ENCODE measurements at regions of chr19 and their contacts with region 1.

Region 1: GRCh38 chr19:37931881-37932655 is 25.1 kb downstream of the SIPA1L3 start:
- DNase-seq: peak; percentile 72
- ATAC-seq: peak; percentile 6
- H3K4me3 ChIP-seq: peak overlapping the region; percentile 21 to 63 (median 55)
- H3K4me3 Mint-ChIP-seq: peak overlapping the region; percentile 85
- H3K27ac ChIP-seq: peak overlapping the region; percentile 78 to 85
- H3K27ac Mint-ChIP-seq: peak overlapping the region; percentile 87
- H3K4me1 ChIP-seq: peaks cover 86 to 95% of the 10 kb centered on the region in 2 donors
- H3K4me1 Mint-ChIP-seq: peaks cover 90% of the 10 kb centered on the region
- H3K27me3 ChIP-seq: no peaks in the 10 kb centered on the region
- H3K27me3 Mint-ChIP-seq: no peaks in the 10 kb centered on the region
- CTCF ChIP-seq: no peak

Region 2: GRCh38 chr19:37691881-37692504 is 240.1 kb before region 1 on chr19:
- CTCF ChIA-PET with region 1: no interaction called
- POLR2A ChIA-PET with region 1: no interaction called
- intact Hi-C with region 1: no loop called
- DNase-seq: peak; percentile 90
- ATAC-seq: peak; percentile 97
- H3K4me3 ChIP-seq: peak overlapping the region; percentile 53 to 80 (median 68)
- H3K4me3 Mint-ChIP-seq: peak overlapping the region; percentile 99
- H3K27ac ChIP-seq: peak overlapping the region; percentile 68 to 74
- H3K27ac Mint-ChIP-seq: peak overlapping the region; percentile 98
- H3K4me1 ChIP-seq: peaks cover 0 to 4% of the 10 kb centered on the region in 2 donors
- H3K4me1 Mint-ChIP-seq: peaks cover 11% of the 10 kb centered on the region
- H3K27me3 ChIP-seq: no peaks in the 10 kb centered on the region
- H3K27me3 Mint-ChIP-seq: no peaks in the 10 kb centered on the region
- CTCF ChIP-seq: peak; percentile 27

Region 3: DNA sequence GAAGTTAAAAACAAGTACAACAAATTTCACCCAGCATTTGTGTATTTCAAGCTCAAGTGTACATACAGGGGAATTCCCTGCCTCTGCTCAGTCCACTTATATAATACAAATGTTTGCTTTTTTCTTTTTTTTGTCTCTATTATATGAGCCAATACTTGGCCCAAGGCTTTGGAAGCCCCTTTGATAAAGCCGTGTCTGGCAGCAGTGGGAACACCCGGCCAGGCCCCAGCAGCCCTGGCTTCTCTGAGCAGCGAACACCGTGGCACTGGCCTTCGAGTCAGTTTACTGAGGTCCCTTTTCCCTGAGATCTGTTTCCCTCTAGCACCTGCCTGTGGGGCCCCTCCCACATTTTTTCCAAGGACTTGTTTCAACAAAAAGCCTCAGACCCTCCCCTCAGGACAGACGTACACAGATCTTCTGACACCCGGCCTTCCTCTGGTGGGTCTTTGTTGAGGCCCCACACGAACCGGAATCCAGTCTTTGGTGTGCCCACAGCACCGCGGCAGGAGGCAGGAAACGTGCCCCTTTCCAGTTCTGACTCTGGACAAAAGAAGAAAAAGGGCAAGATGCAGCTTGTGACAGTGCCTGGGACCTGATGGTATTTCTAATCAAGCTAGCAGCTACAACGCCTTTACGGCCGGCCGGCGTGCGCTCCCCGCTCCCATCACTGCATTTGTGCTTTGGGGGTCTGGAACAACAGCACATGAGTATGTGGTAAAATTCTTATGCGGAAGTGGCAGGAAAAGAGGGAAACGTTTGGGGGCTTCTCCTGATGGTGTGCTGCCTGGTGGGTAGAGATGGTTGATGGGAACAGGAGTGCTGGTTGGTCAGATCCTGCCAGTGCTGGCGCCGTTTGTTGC is 11.2 kb before region 1 on chr19:
- CTCF ChIA-PET with region 1: interaction called, 17 read pairs
- POLR2A ChIA-PET with region 1: interaction called, 5 read pairs
- intact Hi-C with region 1: no loop called
- DNase-seq: peak; percentile 45
- ATAC-seq: peak; percentile 12
- H3K4me3 ChIP-seq: peak overlapping the region in 4 of 5 experiments; percentile 1 to 56 (median 24)
- H3K4me3 Mint-ChIP-seq: peak overlapping the region; percentile 80
- H3K27ac ChIP-seq: peak overlapping the region; percentile 72 to 87
- H3K27ac Mint-ChIP-seq: peak overlapping the region; percentile 95
- H3K4me1 ChIP-seq: peaks cover 77 to 87% of the 10 kb centered on the region in 2 donors
- H3K4me1 Mint-ChIP-seq: peaks cover 69% of the 10 kb centered on the region
- H3K27me3 ChIP-seq: no peaks in the 10 kb centered on the region
- H3K27me3 Mint-ChIP-seq: no peaks in the 10 kb centered on the region
- CTCF ChIP-seq: no peak

Region 4: GRCh38 chr19:37963190-37963936 is 31.3 kb after region 1 on chr19:
- CTCF ChIA-PET with region 1: no interaction called
- POLR2A ChIA-PET with region 1: interaction called, 3 read pairs
- intact Hi-C with region 1: loop called (anchors 2 kb)
- DNase-seq: no peak
- ATAC-seq: no peak
- H3K4me3 ChIP-seq: no peak overlapping the region
- H3K4me3 Mint-ChIP-seq: peak overlapping the region; percentile 29
- H3K27ac ChIP-seq: peak overlapping the region; percentile 69 to 77
- H3K27ac Mint-ChIP-seq: peak overlapping the region; percentile 91
- H3K4me1 ChIP-seq: peaks cover 58 to 72% of the 10 kb centered on the region in 2 donors
- H3K4me1 Mint-ChIP-seq: peaks cover 71% of the 10 kb centered on the region
- H3K27me3 ChIP-seq: no peaks in the 10 kb centered on the region
- H3K27me3 Mint-ChIP-seq: no peaks in the 10 kb centered on the region
- CTCF ChIP-seq: no peak

Region 5: DNA sequence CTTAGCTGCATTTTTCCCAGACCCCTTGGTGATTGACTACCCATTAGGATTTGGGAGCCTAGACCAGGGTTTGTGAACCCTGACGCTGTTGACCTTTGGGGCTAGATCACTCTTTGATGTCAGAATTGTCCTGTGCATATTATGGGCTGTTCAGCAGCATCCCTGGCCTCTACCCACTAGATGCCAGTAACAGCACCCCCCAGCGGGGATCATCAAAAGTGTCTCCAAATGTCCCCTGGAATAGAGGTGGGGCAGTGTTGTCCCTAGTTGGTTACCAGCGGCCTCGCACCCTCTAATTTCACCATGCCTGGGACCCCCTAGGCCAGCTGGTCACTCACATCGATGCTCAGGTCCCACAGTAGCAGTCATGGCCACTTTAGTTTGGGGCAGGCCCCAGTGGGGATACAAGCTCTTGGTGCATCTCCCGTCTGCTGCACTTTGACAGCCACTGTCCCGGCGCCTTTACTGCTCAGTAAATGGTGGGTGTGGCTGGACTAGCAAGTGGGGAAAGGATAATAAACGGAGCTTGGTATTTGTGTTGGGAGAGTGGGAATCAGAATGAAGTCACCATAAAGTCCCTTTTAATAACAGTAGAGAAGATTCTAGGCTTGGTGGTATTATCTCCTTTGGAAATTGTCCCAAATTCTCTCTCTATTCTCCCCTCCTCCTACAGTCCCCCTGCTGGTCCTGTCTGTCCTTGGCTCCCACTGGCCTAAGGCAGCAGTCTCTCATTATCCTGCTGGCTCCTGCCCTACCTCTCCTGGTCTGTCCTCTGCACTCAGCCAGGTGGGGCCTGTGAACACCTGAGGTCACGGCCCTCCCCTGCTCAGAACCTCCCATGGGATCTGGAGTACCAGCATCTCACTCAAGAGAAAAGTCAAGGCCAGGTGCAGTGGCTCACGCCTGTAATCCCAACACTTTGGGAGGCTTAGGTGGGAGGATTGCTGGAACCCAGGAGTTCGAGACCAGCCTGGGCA is 55.6 kb after region 1 on chr19:
- CTCF ChIA-PET with region 1: interaction called, 10 read pairs
- POLR2A ChIA-PET with region 1: interaction called, 7 read pairs
- intact Hi-C with region 1: no loop called
- DNase-seq: no peak
- ATAC-seq: no peak
- H3K4me3 ChIP-seq: no peak overlapping the region
- H3K4me3 Mint-ChIP-seq: no peak overlapping the region
- H3K27ac ChIP-seq: peak overlapping the region; percentile 88 to 93
- H3K27ac Mint-ChIP-seq: peak overlapping the region; percentile 99
- H3K4me1 ChIP-seq: peaks cover 75 to 91% of the 10 kb centered on the region in 2 donors
- H3K4me1 Mint-ChIP-seq: peaks cover 85% of the 10 kb centered on the region
- H3K27me3 ChIP-seq: no peaks in the 10 kb centered on the region
- H3K27me3 Mint-ChIP-seq: no peaks in the 10 kb centered on the region
- CTCF ChIP-seq: no peak

Region 6: DNA sequence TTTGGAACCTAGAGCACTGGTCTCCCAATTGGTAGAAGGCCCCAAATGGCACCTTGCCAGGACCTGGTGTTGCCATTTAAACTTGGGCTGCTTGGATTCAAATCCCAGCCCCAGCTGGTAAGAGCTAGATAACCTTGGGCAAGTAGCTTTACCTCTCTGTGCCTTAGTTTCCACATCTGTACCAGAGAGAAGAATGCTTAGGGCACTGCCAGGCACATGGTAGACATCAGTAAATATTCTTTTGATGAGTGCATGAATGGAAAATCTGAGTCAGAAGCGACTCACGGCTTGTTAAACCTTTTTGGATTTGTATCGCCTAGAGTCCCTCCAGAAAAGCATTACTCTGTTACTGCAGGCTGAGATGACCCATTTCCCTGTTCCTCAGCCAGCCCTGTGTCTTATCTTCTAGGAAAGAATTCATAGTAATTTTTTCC is 65.9 kb after region 1 on chr19:
- CTCF ChIA-PET with region 1: no interaction called
- POLR2A ChIA-PET with region 1: no interaction called
- intact Hi-C with region 1: no loop called
- DNase-seq: no peak
- ATAC-seq: peak; percentile 45
- H3K4me3 ChIP-seq: no peak overlapping the region
- H3K4me3 Mint-ChIP-seq: no peak overlapping the region
- H3K27ac ChIP-seq: peak overlapping the region in 1 of 2 donors; percentile 62
- H3K27ac Mint-ChIP-seq: peak overlapping the region; percentile 59
- H3K4me1 ChIP-seq: peaks cover 30 to 43% of the 10 kb centered on the region in 2 donors
- H3K4me1 Mint-ChIP-seq: peaks cover 62% of the 10 kb centered on the region
- H3K27me3 ChIP-seq: no peaks in the 10 kb centered on the region
- H3K27me3 Mint-ChIP-seq: no peaks in the 10 kb centered on the region
- CTCF ChIP-seq: no peak

Region 7: DNA sequence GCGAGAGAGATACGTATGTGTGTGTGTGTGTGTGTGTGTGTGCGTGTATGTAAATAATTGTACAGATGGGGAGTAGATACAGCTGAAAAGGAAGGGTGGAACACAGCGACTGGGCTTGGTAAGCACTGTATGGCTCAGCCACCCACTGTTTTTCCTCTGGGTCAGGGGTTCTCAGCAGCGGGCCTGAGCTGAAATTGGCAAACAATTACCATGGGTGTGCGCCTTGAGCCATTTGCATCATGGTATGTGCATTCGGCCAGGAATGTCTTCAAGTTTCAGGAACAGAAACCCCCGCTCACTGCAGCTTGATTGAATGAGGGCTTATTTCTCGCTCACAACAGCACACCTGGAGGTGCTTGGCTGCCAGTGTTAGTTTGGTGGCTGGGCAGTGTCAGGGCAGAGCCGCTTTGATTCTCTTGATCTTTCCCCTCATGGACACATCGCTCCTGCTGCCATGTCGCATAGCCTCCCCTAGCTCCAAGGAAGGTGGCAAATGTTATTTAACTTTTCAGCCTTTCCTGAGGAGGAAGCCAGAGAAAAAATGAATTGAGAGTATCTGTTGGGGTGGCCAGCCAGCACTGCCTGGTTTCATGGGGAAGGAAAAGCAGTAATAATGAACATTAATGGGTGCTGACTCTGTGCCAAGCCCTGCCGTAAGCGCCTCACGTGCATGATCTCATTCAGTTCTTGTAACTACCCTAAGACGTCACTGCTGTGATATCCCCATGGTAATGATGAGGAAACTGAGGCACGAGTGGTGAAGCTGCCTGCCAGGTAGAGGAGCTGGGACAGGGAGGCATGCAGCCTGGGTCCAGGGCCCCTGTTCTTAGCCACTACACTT is 101.8 kb after region 1 on chr19:
- CTCF ChIA-PET with region 1: interaction called, 16 read pairs
- POLR2A ChIA-PET with region 1: interaction called, 10 read pairs
- intact Hi-C with region 1: loop called (anchors 1 kb)
- DNase-seq: peak; percentile 93
- ATAC-seq: peak; percentile 79
- H3K4me3 ChIP-seq: peak overlapping the region in 3 of 5 experiments; percentile 16 to 43 (median 36)
- H3K4me3 Mint-ChIP-seq: peak overlapping the region; percentile 86
- H3K27ac ChIP-seq: peak overlapping the region; percentile 84 to 93
- H3K27ac Mint-ChIP-seq: peak overlapping the region; percentile 99
- H3K4me1 ChIP-seq: peaks cover 63 to 87% of the 10 kb centered on the region in 2 donors
- H3K4me1 Mint-ChIP-seq: peaks cover 81% of the 10 kb centered on the region
- H3K27me3 ChIP-seq: no peaks in the 10 kb centered on the region
- H3K27me3 Mint-ChIP-seq: no peaks in the 10 kb centered on the region
- CTCF ChIP-seq: peak; percentile 65

Region 8: DNA sequence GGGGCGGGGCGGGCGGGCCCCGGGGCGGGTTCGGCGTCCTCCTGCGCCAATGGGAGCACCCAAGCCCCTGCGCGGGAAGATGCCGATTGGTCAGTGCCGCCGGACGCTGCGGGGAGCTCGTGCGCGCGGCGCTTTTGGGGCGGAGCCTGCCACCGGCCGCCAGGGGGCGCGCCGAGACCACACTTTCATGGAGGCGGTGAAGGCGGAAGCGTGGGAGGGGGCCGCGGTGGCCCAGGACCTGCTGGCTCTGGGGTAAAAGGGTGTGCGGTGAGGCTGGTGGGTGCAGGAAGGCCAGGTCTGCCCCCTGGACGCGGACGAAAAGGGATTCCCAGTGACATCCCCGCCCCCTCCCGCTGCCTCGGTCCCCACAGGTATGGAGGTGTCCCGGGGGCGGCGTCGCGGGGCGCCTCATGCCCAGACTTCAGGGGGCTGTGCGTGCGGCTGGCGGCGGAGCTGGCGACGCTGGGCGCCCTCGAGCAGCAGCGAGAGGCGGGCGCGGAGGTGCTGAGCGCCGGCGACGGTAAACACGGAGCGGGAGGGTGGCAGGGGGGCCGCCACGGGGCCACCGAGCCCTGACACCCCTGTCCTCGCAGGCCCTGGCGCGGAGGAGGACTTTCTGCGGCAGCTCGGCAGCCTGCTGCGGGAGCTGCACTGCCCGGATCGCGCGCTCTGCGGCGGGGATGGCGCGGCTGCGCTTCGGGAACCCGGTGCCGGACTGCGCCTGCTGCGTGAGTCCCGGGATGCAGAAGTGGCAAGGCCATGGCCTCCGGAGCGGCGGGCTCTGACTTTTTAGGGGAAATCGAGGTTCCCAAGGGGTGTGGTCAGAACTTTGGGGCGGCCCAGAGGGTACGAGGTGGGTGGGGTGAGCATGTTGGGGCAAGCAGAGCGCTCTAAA is 471.1 kb after region 1 on chr19 and contains the start of gene FAM98C:
- CTCF ChIA-PET with region 1: no interaction called
- POLR2A ChIA-PET with region 1: no interaction called
- intact Hi-C with region 1: no loop called
- DNase-seq: peak; percentile 99
- ATAC-seq: peak; percentile 97
- H3K4me3 ChIP-seq: peak within 1 kb of the TSS; percentile 41 to 85 (median 75)
- H3K4me3 Mint-ChIP-seq: peak within 1 kb of the TSS; percentile 94
- H3K27ac ChIP-seq: peak within 1 kb of the TSS; percentile 61 to 79
- H3K27ac Mint-ChIP-seq: peak within 1 kb of the TSS; percentile 94
- H3K4me1 ChIP-seq: peaks cover 5 to 14% of the 10 kb centered on the region in 2 donors
- H3K4me1 Mint-ChIP-seq: peaks cover 18% of the 10 kb centered on the region
- H3K27me3 ChIP-seq: peaks cover 0 to 20% (median 7%) of the 10 kb centered on the region in 4 experiments
- H3K27me3 Mint-ChIP-seq: peaks cover 18% of the 10 kb centered on the region
- CTCF ChIP-seq: peak; percentile 99
- total RNA-seq, gene FAM98C: 44.1 and 45.3 TPM in 2 replicates